GM12878 (cell line): ENCODE measurements at regions of chr12 and their contacts with region 1.

Region 1: GRCh38 chr12:9647825-9648700 is 21.4 kb upstream of the CLEC2D start:
- DNase-seq: peak; percentile 89
- ATAC-seq: peak; percentile 88
- H3K4me3 ChIP-seq: peak overlapping the region; percentile 79
- H3K27ac ChIP-seq: peak overlapping the region; percentile 81
- H3K4me1 ChIP-seq: peaks cover 14% of the 10 kb centered on the region
- H3K27me3 ChIP-seq: no peaks in the 10 kb centered on the region
- CTCF ChIP-seq: no peak
- EP300 ChIP-seq: peak; percentile 44 to 52; a peak in 1 of 4 replicates
- POLR2A ChIP-seq: peak; percentile 79; the same call in 1 of the 2 replicates
- RAD21 ChIP-seq: no peak

Region 2: GRCh38 chr12:9364224-9365176 is 283.6 kb before region 1 on chr12:
- CTCF ChIA-PET with region 1: no interaction called
- POLR2A ChIA-PET with region 1: no interaction called
- RAD21 ChIA-PET with region 1: no interaction called
- SMC1A ChIA-PET with region 1: interaction called, 3 read pairs
- in situ Hi-C with region 1: no loop called
- intact Hi-C with region 1: loop called (anchors 5 kb)
- DNase-seq: peak; percentile 98
- ATAC-seq: peak; percentile 89
- H3K4me3 ChIP-seq: peak overlapping the region; percentile 29; the same call in 1 of the 2 replicates
- H3K27ac ChIP-seq: peak overlapping the region; percentile 88
- H3K4me1 ChIP-seq: peaks cover 42% of the 10 kb centered on the region
- H3K27me3 ChIP-seq: no peaks in the 10 kb centered on the region
- CTCF ChIP-seq: no peak
- EP300 ChIP-seq: peak; percentile 80 to 82
- POLR2A ChIP-seq: peak; percentile 89
- RAD21 ChIP-seq: 0 out of 2 replicates have a peak, but pooled peaks have one; percentile 9

Region 3: DNA sequence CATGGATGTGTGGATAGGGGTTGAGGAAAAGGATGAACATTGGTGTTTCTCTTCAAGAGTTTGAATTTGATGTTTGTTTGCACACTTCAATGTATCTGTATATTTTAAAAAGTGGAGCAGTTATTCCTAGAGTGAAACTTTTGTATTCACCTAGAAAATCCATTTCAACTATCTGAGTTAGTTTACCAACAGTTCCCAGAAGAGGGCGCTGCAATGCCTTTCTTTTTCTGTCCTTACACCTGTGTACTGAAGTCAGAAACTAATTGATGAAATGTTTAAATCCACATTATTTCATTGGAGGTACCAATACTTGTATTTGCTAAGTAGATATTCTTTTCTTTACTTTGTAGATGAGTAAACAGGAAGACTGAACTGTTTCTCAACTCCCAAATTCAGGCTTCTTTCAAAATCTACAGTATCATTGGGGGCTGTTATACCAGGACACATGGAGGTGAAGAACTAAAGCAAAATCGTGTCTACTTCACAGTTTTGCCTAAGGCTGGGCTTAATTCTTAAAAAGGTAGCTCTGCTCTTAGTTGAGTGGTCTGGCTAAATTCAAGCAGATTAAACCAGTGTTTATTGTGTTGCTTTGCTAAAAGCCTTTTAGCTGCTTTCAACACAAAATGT is 13.8 kb before region 1 on chr12:
- CTCF ChIA-PET with region 1: interaction called, 10 read pairs
- POLR2A ChIA-PET with region 1: no interaction called
- RAD21 ChIA-PET with region 1: interaction called, 7 read pairs
- SMC1A ChIA-PET with region 1: interaction called, 14 read pairs
- in situ Hi-C with region 1: no loop called
- intact Hi-C with region 1: no loop called
- DNase-seq: no peak
- ATAC-seq: peak; percentile 79
- H3K4me3 ChIP-seq: no peak overlapping the region
- H3K27ac ChIP-seq: no peak overlapping the region
- H3K4me1 ChIP-seq: peaks cover 15% of the 10 kb centered on the region; the same call in 1 of the 2 replicates
- H3K27me3 ChIP-seq: no peaks in the 10 kb centered on the region
- CTCF ChIP-seq: peak; percentile 52 to 71 (median 61); a peak in 5 of 6 replicates
- EP300 ChIP-seq: no peak
- POLR2A ChIP-seq: no peak
- RAD21 ChIP-seq: peak; percentile 91

Region 4: DNA sequence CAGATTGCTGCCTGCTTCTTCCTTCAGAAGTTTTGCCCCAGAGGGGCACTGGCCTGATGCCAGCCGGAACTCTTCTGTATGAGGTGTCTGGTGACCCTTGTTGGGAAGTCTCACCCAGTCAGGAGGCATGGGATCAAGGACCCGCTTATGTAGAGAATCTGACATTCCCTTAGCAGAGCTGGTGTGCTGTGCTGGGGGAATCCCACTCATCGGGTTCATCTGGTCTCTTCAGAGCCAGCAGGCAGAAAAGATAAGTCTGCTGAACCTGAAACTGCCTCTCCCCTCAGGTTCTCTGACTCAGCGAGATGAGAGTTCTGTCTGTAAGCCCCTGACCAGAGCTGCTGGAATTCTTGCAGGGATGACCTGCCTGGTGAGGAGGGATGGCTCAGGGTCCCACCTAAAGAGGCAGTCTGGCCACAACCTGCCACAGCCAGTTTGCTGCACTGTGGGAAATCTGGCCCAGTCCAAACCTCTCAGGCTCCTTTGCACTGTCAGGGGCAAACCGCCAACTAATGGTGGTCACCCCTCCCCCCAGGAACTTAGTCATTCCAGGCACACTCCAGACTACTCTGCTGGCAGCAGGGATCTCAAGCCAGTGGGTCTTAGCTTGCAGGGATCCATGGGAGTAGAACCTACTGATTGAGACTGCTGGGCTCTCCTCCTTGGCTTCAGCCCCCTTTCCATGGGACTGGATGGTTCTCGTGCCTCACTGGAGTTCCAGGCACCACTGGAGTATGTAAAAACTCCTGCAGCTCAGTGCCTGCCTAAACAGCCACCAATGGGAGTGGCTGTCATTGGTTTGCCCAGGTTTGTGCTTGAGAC is 25.6 kb after region 1 on chr12:
- CTCF ChIA-PET with region 1: interaction called, 4 read pairs
- POLR2A ChIA-PET with region 1: interaction called, 7 read pairs
- RAD21 ChIA-PET with region 1: interaction called, 14 read pairs
- SMC1A ChIA-PET with region 1: interaction called, 17 read pairs
- in situ Hi-C with region 1: no loop called
- intact Hi-C with region 1: loop called (anchors 1 kb)
- DNase-seq: no peak
- ATAC-seq: peak; percentile 41
- H3K4me3 ChIP-seq: peak overlapping the region; percentile 61
- H3K27ac ChIP-seq: peak overlapping the region; percentile 91
- H3K4me1 ChIP-seq: peaks cover 25% of the 10 kb centered on the region
- H3K27me3 ChIP-seq: peaks cover 0 to 2% of the 10 kb centered on the region in 2 experiments; a peak in 1 of 4 replicates
- CTCF ChIP-seq: no peak
- EP300 ChIP-seq: no peak
- POLR2A ChIP-seq: no peak; the same call in 1 of the 2 replicates
- RAD21 ChIP-seq: no peak

Region 5: GRCh38 chr12:9731797-9732196 is 83.7 kb after region 1 on chr12:
- CTCF ChIA-PET with region 1: no interaction called
- POLR2A ChIA-PET with region 1: no interaction called
- RAD21 ChIA-PET with region 1: no interaction called
- SMC1A ChIA-PET with region 1: no interaction called
- in situ Hi-C with region 1: loop called (anchors 5 kb)
- intact Hi-C with region 1: no loop called
- DNase-seq: no peak
- ATAC-seq: peak; percentile 73
- H3K4me3 ChIP-seq: peak overlapping the region; percentile 80
- H3K27ac ChIP-seq: peak overlapping the region; percentile 84
- H3K4me1 ChIP-seq: peaks cover 7% of the 10 kb centered on the region; the same call in 1 of the 2 replicates
- H3K27me3 ChIP-seq: no peaks in the 10 kb centered on the region
- CTCF ChIP-seq: no peak
- EP300 ChIP-seq: no peak
- POLR2A ChIP-seq: no peak
- RAD21 ChIP-seq: 0 out of 2 replicates have a peak, but pooled peaks have one; percentile 12